Dendritic cell treated with granulocyte-macrophage colony-stimulating factor and Interleukin-4, amounts not matched to agents 40 ng/mL and 50 ng/mL, for 4 days (primary cell): ENCODE measurements at regions of chr5 and their contacts with region 1.

Region 1: DNA sequence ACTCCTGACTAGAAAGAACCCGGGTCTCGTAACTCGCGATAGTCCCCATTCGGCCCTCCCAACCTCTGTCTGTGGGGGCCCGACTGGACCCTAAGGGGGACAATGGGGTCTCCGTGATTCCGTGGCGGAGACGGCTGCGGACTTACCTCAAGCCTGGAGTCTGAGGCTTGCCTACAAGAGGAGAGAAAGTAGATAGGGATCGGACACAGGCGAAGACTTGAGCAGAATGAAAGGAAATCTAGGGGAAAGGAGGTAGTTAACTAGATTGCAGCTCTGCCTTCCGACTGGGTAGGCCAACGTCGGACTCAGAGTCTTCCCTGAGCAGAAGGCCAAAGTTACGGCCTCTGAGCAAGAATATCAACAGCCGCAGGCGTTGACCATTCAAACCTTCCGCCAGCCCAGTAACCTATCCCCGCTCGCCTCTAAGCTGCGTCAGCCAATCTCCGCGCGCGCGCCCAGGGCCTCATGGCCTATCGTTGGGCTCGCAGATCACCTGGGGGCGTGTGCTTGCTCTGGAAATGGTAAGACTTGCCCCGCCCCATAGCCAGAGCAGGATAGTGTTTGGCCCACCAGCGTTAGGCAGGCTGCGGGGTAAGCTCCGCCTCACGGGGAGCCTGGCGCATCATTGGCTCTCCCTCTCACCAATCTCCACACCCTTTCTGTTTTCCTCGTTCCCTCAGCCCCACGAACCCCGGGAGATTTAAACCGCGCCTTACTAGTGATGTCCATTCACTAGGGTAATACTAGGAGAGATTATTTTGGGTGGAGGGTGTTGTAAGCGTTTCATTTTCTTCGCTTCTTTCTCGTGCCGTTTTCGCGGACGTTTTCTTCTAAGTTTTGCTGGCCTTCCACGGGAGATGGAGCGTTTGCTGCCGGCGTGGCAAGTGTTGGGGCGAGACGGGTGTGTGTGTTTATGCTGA is at the start of gene CDC25C:
- H3K4me3 Mint-ChIP-seq: peak within 1 kb of the TSS; percentile 80
- H3K27ac Mint-ChIP-seq: peak within 1 kb of the TSS; percentile 57
- H3K4me1 Mint-ChIP-seq: peaks cover 27% of the 10 kb centered on the region
- H3K27me3 Mint-ChIP-seq: no peaks in the 10 kb centered on the region

Region 2: GRCh38 chr5:138264183-138264582 is 67.5 kb before region 1 on chr5:
- intact Hi-C with region 1: no loop called
- H3K4me3 Mint-ChIP-seq: no peak overlapping the region
- H3K27ac Mint-ChIP-seq: no peak overlapping the region
- H3K4me1 Mint-ChIP-seq: no peaks in the 10 kb centered on the region
- H3K27me3 Mint-ChIP-seq: peaks cover 7% of the 10 kb centered on the region

Region 3: DNA sequence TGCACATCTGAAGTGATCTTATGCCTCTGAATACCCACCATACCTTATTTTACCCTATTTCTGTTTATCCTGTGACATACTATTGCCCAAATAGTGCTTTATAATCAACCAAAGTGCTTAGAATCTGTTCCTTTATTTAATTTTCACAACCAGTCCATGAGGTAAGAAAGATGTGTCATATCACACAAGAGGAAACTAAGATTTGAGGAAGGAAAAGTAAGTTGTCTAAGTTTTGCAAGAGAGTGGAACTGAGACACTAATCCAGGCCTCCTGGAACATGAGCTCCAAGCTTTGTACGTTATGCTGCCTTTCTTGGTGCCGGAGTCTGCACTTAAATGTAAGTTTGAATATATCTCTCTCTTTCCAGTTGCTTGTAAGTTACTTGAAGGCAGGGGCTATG is 38.0 kb after region 1 on chr5:
- intact Hi-C with region 1: loop called (anchors 5 kb)
- H3K4me3 Mint-ChIP-seq: peak overlapping the region; percentile 46
- H3K27ac Mint-ChIP-seq: peak overlapping the region; percentile 93
- H3K4me1 Mint-ChIP-seq: peaks cover 55% of the 10 kb centered on the region
- H3K27me3 Mint-ChIP-seq: no peaks in the 10 kb centered on the region

Region 4: DNA sequence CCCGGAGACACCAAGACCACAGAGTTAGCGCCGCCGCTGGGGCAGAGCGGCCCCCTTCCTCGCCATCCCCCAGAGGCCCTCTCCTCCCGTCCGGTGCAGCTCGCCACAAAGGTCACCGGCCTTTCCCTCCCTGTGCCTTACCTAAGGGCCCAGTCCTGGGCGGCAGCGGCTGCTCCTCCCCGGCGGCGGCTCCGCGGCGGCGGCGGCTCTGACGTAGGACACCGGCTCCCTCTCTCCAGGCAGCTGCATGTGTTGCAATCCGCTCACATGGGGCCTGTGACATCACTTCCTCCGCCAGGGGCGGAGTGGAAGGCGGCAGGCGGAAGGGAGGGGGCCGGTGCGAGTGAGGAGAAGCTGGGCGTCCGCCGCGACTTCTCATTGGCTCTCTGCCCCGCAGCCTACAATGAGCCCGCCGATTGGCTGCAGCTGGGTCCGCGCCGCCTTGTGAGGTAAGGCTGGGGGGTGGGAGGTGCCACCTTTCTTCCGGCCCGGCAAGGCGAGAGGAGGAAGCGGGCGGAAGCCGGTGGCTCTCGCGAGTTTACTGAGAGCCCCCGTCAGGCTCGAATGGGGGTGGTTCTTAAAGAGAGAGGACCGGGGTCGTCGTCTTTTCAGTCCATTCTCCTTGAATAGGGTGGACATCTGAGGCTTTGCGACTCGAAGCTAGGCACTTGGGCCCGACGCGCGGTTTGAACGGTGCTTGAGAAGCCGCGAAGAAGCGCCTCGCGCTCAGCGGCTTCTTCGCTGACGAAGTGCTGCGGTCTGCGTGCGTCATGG is 211.4 kb after region 1 on chr5 and contains the start of gene ETF1:
- intact Hi-C with region 1: no loop called
- H3K4me3 Mint-ChIP-seq: peak within 1 kb of the TSS; percentile 97
- H3K27ac Mint-ChIP-seq: peak within 1 kb of the TSS; percentile 91
- H3K4me1 Mint-ChIP-seq: peaks cover 59% of the 10 kb centered on the region
- H3K27me3 Mint-ChIP-seq: no peaks in the 10 kb centered on the region